Cardiac septum (tissue), 1 donor: ENCODE measurements at regions of chr5 and their contacts with region 1.

Region 1: DNA sequence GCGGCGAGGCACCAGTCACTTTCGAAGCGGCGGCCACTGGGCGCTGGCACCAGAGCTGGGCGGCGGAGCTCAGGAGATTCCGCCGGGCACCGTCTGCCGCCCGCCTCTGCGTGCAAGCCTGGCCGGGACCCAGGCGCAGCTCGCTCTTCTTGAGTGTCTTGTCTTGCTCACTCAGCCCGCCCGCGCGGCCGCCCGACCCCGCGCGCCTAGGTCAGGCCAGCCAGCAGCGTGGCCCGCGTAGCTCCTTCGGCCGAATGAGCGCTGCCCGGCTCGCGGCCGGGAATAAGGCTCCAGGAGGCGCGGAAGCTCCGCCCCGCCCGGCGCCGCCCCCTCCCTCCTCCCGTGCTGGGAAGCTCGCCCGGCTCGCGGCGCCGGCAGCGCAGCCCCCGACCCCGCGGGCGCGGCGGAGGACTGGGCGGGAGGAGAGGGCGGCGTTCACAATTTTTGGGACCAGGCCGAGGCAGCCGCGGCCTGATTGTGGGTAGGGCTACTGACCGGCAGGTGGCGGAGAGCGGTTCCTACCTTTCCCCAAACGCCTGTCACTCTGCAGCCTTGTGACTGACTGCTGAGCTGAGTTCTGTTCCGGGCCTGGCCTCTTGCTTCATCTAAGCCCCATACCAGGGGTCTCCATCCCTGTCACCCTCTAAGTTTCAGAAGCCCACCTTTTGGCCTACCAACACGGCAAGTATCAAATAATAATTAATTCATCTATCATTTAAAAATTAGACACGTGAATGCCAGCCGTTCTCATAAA is at the start of gene HBEGF:
- DNase-seq: peak; percentile 94
- total RNA-seq, gene HBEGF: 73.9 TPM

Region 2: GRCh38 chr5:140174465-140175366 is 171.8 kb before region 1 on chr5 and contains the start of gene CYSTM1:
- intact Hi-C with region 1: loop called (anchors 5 kb)
- DNase-seq: peak; percentile 99
- total RNA-seq, gene CYSTM1: 111 TPM

Region 3: DNA sequence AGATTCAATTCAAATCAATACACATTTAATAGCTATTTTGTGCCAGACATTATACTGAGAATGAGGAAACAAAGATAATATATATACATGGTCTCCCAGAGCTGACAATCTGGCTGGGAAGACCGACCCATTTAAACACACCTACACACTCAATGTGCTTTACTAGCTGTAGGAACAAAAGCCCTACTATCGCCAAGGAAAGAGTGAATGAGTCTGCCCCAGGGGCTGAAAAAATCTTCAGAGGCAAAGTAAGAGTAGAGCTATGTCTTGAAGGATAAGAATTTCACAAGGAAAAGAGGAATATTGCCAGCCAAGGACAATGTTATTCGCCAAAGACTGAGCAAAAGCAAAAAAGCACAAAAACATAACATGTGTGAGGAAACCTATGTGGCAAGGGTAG is 50.2 kb before region 1 on chr5:
- intact Hi-C with region 1: loop called (anchors 2 kb)
- DNase-seq: no peak